ENCODE measurements at regions of chr7 and their contacts with region 1.

Region 1: DNA sequence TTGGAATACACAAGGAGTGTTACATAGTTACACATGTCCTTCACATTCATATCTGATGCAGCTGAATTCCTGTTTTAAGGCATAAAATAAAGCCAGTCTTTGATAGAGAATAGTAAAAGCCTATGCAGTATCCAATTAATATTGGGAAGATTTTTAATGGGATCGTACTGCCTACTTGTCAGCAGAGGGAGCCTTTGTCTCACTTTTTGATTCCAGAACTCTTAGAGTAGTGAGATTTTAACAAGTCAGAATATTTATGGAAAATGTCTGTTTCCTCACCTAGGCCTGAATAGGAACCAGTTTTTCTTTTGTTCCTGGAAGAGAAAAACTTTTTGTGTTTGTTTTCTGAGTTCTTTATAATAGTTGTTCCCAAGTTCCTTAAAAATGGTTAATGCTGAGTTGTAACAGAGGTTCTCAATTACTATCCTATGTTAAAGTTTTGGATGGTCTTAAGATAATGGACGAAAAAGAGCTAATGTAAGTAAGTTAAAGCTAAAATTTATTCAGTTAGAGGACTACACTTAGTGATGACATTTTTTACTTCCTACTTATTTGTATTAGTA is 114.0 kb downstream of the BBS9 start:
- DNase-seq: peak; percentile 30
- ATAC-seq: peak; percentile 95
- H3K4me3 ChIP-seq: no peak overlapping the region
- H3K27ac ChIP-seq: no peak overlapping the region
- H3K4me1 ChIP-seq: no peaks in the 10 kb centered on the region
- H3K27me3 ChIP-seq: peaks cover 3% of the 10 kb centered on the region; the same call in 1 of the 2 replicates
- CTCF ChIP-seq: peak; percentile 76; the same call in 1 of the 2 replicates

Region 2: GRCh38 chr7:32868116-32868515 is 375.3 kb before region 1 on chr7:
- CTCF ChIA-PET with region 1: no interaction called
- POLR2A ChIA-PET with region 1: no interaction called
- in situ Hi-C with region 1: no loop called
- intact Hi-C with region 1: no loop called
- DNase-seq: no peak
- ATAC-seq: no peak
- H3K4me3 ChIP-seq: no peak overlapping the region
- H3K27ac ChIP-seq: no peak overlapping the region
- H3K4me1 ChIP-seq: no peaks in the 10 kb centered on the region
- H3K27me3 ChIP-seq: no peaks in the 10 kb centered on the region
- CTCF ChIP-seq: no peak

Region 3: GRCh38 chr7:33185786-33186185 is 57.6 kb before region 1 on chr7:
- CTCF ChIA-PET with region 1: no interaction called
- POLR2A ChIA-PET with region 1: no interaction called
- in situ Hi-C with region 1: no loop called
- intact Hi-C with region 1: loop called (anchors 5 kb)
- DNase-seq: peak; percentile 48
- ATAC-seq: peak; percentile 91
- H3K4me3 ChIP-seq: no peak overlapping the region
- H3K27ac ChIP-seq: no peak overlapping the region
- H3K4me1 ChIP-seq: no peaks in the 10 kb centered on the region
- H3K27me3 ChIP-seq: peaks cover 2% of the 10 kb centered on the region; the same call in 1 of the 2 replicates
- CTCF ChIP-seq: peak; percentile 79; the same call in 1 of the 2 replicates

Region 4: GRCh38 chr7:33757562-33758165 is 514.3 kb after region 1 on chr7:
- CTCF ChIA-PET with region 1: no interaction called
- POLR2A ChIA-PET with region 1: no interaction called
- in situ Hi-C with region 1: no loop called
- intact Hi-C with region 1: loop called (anchors 10 kb)
- DNase-seq: peak; percentile 22
- ATAC-seq: no peak
- H3K4me3 ChIP-seq: no peak overlapping the region
- H3K27ac ChIP-seq: no peak overlapping the region
- H3K4me1 ChIP-seq: no peaks in the 10 kb centered on the region
- H3K27me3 ChIP-seq: peaks cover 10% of the 10 kb centered on the region; the same call in 1 of the 2 replicates
- CTCF ChIP-seq: peak; percentile 73; the same call in 1 of the 2 replicates

Region 5: DNA sequence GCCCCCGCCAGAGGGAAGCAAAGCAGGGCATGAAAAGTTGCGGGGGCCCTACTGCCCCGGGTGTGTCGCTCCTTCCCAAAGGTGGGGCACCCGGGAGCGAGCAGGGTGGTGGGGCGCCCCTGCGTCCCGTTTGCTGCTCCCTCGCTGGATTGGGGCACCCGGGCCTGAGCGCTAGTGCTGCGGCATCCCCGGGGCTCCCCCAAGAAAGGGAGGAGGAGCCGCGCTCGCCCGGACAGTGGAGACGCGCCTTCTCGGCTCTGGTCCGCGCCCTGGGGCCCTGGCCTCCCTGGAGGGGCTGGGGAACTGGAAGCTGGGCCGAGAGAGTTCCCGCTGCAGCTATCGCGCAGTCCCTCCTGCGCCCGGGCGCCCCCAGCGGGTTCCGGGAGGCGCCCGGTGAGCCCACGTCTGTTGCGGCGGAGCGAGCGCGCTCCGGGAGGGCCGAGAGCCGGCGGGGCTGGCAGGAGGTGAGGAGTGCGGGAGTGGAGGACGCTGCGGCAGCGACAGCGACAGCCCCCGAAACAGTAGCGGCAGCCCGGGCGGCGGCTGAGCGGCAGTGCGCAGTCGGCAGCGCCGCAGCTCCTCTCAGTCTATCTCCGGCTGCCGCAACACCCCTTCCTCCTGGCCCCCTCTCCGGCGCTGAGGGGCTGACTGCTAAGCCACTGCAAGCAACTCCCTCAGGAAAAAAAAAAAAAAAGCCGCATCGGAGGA is 661.4 kb after region 1 on chr7:
- CTCF ChIA-PET with region 1: no interaction called
- POLR2A ChIA-PET with region 1: no interaction called
- in situ Hi-C with region 1: no loop called
- intact Hi-C with region 1: loop called (anchors 10 kb)
- DNase-seq: no peak
- ATAC-seq: peak; percentile 84
- H3K4me3 ChIP-seq: peak overlapping the region; percentile 48 to 53
- H3K27ac ChIP-seq: no peak overlapping the region
- H3K4me1 ChIP-seq: peaks cover 4% of the 10 kb centered on the region
- H3K27me3 ChIP-seq: peaks cover 69% of the 10 kb centered on the region
- CTCF ChIP-seq: peak; percentile 39

Region 6: GRCh38 chr7:33932832-33933468 is 689.5 kb after region 1 on chr7:
- CTCF ChIA-PET with region 1: interaction called, 13 read pairs
- POLR2A ChIA-PET with region 1: no interaction called
- in situ Hi-C with region 1: no loop called
- intact Hi-C with region 1: loop called (anchors 1 kb)
- DNase-seq: peak; percentile 84
- ATAC-seq: peak; percentile 92
- H3K4me3 ChIP-seq: 0 out of 4 replicates have a peak overlapping the region, but pooled peaks of 1 of the 2 experiments have one; percentile 7
- H3K27ac ChIP-seq: no peak overlapping the region
- H3K4me1 ChIP-seq: no peaks in the 10 kb centered on the region; the same call in 1 of the 2 replicates
- H3K27me3 ChIP-seq: peaks cover 18% of the 10 kb centered on the region
- CTCF ChIP-seq: peak; percentile 98

Measured in Panc1 (cell line).